T-cell (primary cell): ENCODE measurements at regions of chr4 and their contacts with region 1.

Region 1: GRCh38 chr4:138204507-138204906 is 37.6 kb downstream of the SLC7A11 start:
- DNase-seq: no peak
- ATAC-seq: no peak
- H3K4me3 ChIP-seq: no peak overlapping the region
- H3K4me3 Mint-ChIP-seq: no peak overlapping the region
- H3K27ac ChIP-seq: no peak overlapping the region
- H3K27ac Mint-ChIP-seq: no peak overlapping the region
- H3K4me1 ChIP-seq: no peaks in the 10 kb centered on the region
- H3K4me1 Mint-ChIP-seq: no peaks in the 10 kb centered on the region
- H3K27me3 ChIP-seq: no peaks in the 10 kb centered on the region
- H3K27me3 Mint-ChIP-seq: no peaks in the 10 kb centered on the region

Region 2: GRCh38 chr4:138124472-138124871 is 80.0 kb before region 1 on chr4:
- CTCF ChIA-PET with region 1: no interaction called
- POLR2A ChIA-PET with region 1: no interaction called
- DNase-seq: no peak
- ATAC-seq: no peak
- H3K4me3 ChIP-seq: no peak overlapping the region
- H3K4me3 Mint-ChIP-seq: no peak overlapping the region
- H3K27ac ChIP-seq: no peak overlapping the region
- H3K27ac Mint-ChIP-seq: no peak overlapping the region
- H3K4me1 ChIP-seq: no peaks in the 10 kb centered on the region
- H3K4me1 Mint-ChIP-seq: no peaks in the 10 kb centered on the region
- H3K27me3 ChIP-seq: no peaks in the 10 kb centered on the region
- H3K27me3 Mint-ChIP-seq: no peaks in the 10 kb centered on the region

Region 3: GRCh38 chr4:138190452-138190858 is 14.1 kb before region 1 on chr4:
- CTCF ChIA-PET with region 1: no interaction called
- POLR2A ChIA-PET with region 1: no interaction called
- DNase-seq: no peak
- ATAC-seq: no peak
- H3K4me3 ChIP-seq: no peak overlapping the region
- H3K4me3 Mint-ChIP-seq: no peak overlapping the region
- H3K27ac ChIP-seq: no peak overlapping the region
- H3K27ac Mint-ChIP-seq: no peak overlapping the region
- H3K4me1 ChIP-seq: no peaks in the 10 kb centered on the region
- H3K4me1 Mint-ChIP-seq: no peaks in the 10 kb centered on the region
- H3K27me3 ChIP-seq: no peaks in the 10 kb centered on the region
- H3K27me3 Mint-ChIP-seq: no peaks in the 10 kb centered on the region

Region 4: DNA sequence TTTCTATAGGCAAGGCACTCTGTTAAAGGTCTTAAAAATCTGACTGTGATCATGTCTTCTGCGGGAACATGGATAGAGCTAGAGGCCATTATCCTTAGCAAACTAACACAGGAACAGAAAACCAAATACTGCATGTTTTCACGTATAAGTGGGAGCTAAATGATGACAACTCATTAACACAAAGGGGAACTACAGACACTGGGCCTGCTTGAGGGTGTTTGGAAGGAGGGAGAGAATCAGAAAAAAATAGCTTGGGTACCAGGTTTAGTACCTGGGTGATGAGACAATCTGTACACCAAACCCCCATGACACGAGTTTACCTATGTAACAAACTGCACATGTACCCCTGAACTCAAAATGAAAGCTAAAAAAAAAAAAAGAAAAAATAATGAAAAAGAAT is 25.5 kb after region 1 on chr4:
- CTCF ChIA-PET with region 1: no interaction called
- POLR2A ChIA-PET with region 1: interaction called in 1 of 2 experiments, 12 read pairs
- DNase-seq: no peak
- ATAC-seq: no peak
- H3K4me3 ChIP-seq: no peak overlapping the region
- H3K4me3 Mint-ChIP-seq: no peak overlapping the region
- H3K27ac ChIP-seq: no peak overlapping the region
- H3K27ac Mint-ChIP-seq: no peak overlapping the region
- H3K4me1 ChIP-seq: no peaks in the 10 kb centered on the region
- H3K4me1 Mint-ChIP-seq: no peaks in the 10 kb centered on the region
- H3K27me3 ChIP-seq: no peaks in the 10 kb centered on the region
- H3K27me3 Mint-ChIP-seq: no peaks in the 10 kb centered on the region

Region 5: GRCh38 chr4:138475116-138475515 is 270.6 kb after region 1 on chr4:
- CTCF ChIA-PET with region 1: no interaction called
- POLR2A ChIA-PET with region 1: no interaction called
- DNase-seq: no peak
- ATAC-seq: no peak
- H3K4me3 ChIP-seq: no peak overlapping the region
- H3K4me3 Mint-ChIP-seq: no peak overlapping the region
- H3K27ac ChIP-seq: no peak overlapping the region
- H3K27ac Mint-ChIP-seq: no peak overlapping the region
- H3K4me1 ChIP-seq: no peaks in the 10 kb centered on the region
- H3K4me1 Mint-ChIP-seq: no peaks in the 10 kb centered on the region
- H3K27me3 ChIP-seq: no peaks in the 10 kb centered on the region
- H3K27me3 Mint-ChIP-seq: no peaks in the 10 kb centered on the region